GM23248 (cell line): ENCODE measurements at regions of chr6 and their contacts with region 1.

Region 1: DNA sequence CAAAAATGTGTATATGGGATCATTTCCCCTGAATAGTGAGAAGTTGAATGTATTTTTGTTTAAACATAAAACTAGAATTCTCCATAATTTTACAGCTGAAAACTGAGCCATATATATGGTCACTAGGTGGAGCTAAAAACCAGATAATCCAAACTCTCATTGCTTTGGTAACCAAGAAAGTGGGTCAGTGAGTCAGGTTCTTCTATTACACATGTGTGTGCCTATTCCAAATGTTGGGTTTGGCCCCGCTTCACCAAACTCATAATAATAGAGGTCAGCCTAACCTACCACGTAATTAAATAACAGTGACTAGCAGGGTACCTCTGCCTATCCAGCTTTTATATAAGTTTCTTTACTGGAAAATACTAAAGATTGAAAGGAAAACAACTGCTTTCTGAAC is 19.3 kb upstream of the RNGTT start:
- DNase-seq: peak; percentile 95
- H3K4me3 ChIP-seq: peak overlapping the region; percentile 28; the same call in 1 of the 2 replicates
- H3K27ac ChIP-seq: no peak overlapping the region
- H3K4me1 ChIP-seq: no peaks in the 10 kb centered on the region; the same call in 1 of the 2 replicates
- H3K27me3 ChIP-seq: peaks cover 16% of the 10 kb centered on the region; the same call in 1 of the 2 replicates

Region 2: DNA sequence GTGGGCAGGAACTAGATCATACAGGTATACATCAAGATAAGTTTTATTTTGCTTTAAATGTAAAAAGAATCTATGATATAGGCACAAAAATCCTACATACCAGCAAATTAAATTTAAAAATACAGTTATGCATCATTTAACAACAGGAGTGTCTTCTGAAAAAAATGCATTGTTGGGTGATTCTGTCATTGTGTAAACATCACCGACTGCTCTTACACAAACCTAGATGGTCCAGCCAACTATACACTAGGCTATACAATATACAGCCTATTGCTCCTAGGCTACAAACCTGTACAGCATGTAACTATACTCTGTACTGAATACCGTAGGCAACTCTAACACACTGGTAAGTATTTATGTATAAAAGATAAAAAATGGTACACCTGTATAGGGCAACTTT is 158.7 kb before region 1 on chr6:
- in situ Hi-C with region 1: no loop called
- DNase-seq: peak; percentile 59
- H3K4me3 ChIP-seq: no peak overlapping the region
- H3K27ac ChIP-seq: no peak overlapping the region; the same call in 1 of the 2 replicates
- H3K4me1 ChIP-seq: peaks cover 10% of the 10 kb centered on the region
- H3K27me3 ChIP-seq: no peaks in the 10 kb centered on the region

Region 3: DNA sequence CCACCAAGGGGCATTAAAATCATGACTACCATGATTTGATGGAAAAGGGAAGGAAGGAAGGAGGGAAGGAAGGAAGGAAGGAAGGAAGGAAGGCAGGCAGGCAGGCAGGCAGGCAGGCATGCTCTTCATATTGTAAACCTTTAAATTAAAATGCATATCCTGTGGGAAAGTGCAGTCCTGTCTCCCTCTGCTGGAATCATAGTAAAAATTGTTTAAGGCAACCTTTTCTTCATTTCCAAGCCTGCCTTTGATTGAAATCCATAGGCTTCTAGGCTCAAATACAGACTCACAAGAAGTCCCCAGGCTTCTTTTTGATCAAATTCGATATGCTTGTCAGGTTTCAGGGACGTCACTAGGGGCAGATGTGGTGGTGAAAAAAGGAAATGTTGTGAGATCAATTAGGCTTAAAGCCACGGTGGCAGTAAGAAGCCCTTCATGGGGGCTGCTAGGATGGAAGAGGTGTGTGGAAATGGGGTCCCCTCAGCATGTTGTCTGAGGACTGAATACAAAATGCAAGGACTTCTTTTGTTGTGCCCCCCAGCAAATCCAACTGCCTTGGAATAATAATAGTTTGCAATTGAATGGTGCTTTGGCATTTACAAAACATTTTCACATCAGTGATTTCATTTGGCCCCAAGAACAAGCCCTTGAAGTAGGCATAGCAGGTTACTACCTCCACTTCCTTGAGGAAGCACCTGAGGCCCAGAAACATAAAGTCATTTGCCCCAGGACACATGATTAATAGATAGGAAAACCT is 260.0 kb after region 1 on chr6:
- in situ Hi-C with region 1: loop called (anchors 10 kb)
- DNase-seq: peak; percentile 64
- H3K4me3 ChIP-seq: no peak overlapping the region
- H3K27ac ChIP-seq: no peak overlapping the region
- H3K4me1 ChIP-seq: no peaks in the 10 kb centered on the region; the same call in 1 of the 2 replicates
- H3K27me3 ChIP-seq: peaks cover 16% of the 10 kb centered on the region

Region 4: GRCh38 chr6:89371849-89372505 is 389.3 kb after region 1 on chr6:
- in situ Hi-C with region 1: loop called (anchors 25 kb)
- DNase-seq: peak; percentile 78
- H3K4me3 ChIP-seq: no peak overlapping the region
- H3K27ac ChIP-seq: no peak overlapping the region
- H3K4me1 ChIP-seq: no peaks in the 10 kb centered on the region
- H3K27me3 ChIP-seq: no peaks in the 10 kb centered on the region; the same call in 1 of the 2 replicates